ENCODE measurements at regions of chr9 and their contacts with region 1.

Region 1: DNA sequence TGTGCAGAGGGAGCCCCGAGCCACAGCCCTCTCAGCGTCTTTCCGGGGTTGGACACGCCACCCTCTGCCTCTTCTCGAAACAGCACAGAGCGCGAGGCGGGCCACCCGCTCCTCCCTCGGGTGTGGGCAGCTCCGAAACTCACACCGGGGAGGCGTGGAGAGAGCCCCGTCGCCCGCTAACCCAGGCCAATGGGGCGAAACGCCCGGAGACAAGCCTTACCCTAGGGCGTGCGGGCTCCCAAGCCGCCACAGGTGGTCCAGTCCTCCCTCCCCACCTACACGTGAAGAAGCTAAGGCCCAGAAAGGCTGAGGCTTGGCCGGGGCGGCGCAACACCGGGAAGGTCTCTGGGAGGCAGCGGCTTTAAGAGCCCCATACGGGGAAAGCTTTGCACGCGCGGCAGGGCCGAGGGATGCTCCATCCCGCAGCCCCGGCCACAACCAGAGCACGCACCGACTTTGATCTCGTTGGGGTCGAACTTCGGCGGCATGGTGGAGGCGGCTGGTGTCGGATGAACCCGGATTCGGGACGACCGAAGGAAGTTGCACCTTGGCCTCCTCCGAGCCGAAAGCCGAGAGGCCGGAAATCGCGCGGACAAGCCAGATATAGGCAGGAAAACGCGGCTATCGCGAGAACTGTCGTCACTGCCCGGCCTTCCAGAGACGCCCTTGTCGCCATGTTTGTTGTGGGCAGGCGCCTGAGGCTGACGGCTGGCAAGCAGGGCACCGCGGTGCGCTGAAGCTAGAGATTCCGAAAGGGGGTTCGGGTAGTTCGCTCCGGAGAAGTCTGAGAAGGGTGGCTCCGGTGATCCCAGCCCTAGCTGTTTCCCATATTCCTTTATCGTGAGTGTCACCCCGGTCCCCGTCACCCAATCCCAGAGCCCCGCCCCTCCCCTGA is at the starts of genes LRSAM1 and RPL12:
- DNase-seq: peak; percentile 94
- H3K4me3 Mint-ChIP-seq: peak within 1 kb of the TSS; percentile 93
- H3K27ac Mint-ChIP-seq: peak within 1 kb of the TSS; percentile 97
- H3K4me1 Mint-ChIP-seq: peaks cover 40% of the 10 kb centered on the region
- H3K27me3 Mint-ChIP-seq: no peaks in the 10 kb centered on the region
- CTCF ChIP-seq: no peak
- total RNA-seq, gene LRSAM1: 23.5 and 26.2 TPM in 2 replicates
- total RNA-seq, gene RPL12: 3,086 and 3,252 TPM in 2 replicates

Region 2: DNA sequence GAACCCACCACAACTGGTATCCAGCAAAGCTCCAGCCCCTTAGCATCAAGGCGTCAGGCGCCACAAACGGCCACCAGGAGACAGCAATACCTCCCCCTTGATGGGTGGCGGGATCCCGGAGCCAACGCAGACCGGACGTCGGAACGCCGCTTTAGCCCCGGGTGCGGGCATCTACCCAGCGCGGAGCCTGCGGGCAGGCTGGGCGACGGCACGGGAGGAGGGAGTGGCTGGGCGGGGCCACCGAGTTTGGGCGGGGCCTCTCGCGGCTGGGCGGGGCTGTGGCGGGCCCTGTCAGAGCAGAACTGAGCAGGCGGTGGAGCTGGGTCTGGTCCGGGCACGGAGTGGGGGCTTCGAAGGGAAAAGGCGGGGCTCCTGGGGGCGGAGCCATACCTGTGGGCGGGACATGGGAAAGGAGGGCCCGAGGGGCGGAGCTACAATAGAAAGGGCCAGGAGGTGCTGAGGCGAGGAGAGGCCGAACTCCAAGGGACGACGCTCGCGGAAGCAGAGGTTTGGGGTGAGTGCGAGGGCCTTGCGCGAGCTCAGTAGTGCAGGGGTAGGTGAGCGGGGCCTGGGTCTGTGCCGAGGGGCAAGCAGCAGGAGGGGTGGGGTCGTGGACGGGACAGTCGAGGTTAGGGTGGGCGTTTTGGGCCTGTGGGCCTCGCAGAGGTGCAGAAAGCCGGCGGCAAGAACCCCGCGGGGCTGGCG is 226.7 kb before region 1 on chr9:
- CTCF ChIA-PET with region 1: no interaction called
- POLR2A ChIA-PET with region 1: interaction called, 13 read pairs
- intact Hi-C with region 1: loop called (anchors 10 kb)
- DNase-seq: peak; percentile 74
- H3K4me3 Mint-ChIP-seq: peak overlapping the region; percentile 83
- H3K27ac Mint-ChIP-seq: no peak overlapping the region
- H3K4me1 Mint-ChIP-seq: no peaks in the 10 kb centered on the region
- H3K27me3 Mint-ChIP-seq: peaks cover 29% of the 10 kb centered on the region
- CTCF ChIP-seq: no peak

Region 3: DNA sequence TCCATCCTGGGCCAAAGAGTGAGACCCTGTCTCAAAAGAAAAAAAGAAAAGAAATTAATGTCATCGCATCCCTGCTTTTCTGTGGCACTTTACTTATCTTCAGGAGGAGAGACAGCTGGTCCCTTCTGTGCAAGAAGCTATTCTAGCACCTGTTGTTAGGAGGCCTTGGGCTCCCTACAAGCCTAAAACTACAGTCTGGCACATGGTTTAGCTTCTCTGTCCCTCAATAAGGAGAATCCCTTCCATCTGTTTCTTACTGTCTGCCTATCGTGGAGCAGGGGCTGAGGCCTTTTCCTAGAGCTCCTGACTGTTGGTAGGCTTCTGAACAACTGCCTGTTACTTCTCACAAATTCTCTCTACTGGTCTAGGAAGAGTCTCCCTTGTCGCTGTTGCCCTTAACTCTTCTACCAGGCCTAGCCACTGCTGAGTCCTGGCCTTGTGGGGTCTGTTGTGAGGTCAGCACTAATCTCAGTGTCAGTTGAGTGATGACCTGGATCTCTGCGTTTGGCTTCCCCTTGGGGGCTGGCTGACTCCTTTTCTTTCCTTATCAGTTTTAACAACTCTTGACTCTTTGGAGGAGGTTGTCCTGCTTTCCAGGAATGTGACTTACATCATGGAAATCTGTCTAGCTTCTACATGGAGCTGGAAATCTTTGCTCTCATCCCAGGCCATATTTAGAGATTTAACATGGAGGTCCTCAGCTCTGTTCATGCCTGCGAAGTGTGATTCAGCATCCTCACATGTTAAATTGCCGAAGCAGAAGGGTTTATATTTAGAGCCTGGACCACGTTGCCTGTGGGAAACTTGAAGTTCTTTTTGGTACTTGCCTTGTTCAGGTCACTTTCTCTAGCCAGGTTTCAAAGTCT is 192.2 kb before region 1 on chr9:
- CTCF ChIA-PET with region 1: no interaction called
- POLR2A ChIA-PET with region 1: no interaction called
- intact Hi-C with region 1: no loop called
- DNase-seq: no peak
- H3K4me3 Mint-ChIP-seq: no peak overlapping the region
- H3K27ac Mint-ChIP-seq: no peak overlapping the region
- H3K4me1 Mint-ChIP-seq: no peaks in the 10 kb centered on the region
- H3K27me3 Mint-ChIP-seq: no peaks in the 10 kb centered on the region
- CTCF ChIP-seq: no peak

Region 4: DNA sequence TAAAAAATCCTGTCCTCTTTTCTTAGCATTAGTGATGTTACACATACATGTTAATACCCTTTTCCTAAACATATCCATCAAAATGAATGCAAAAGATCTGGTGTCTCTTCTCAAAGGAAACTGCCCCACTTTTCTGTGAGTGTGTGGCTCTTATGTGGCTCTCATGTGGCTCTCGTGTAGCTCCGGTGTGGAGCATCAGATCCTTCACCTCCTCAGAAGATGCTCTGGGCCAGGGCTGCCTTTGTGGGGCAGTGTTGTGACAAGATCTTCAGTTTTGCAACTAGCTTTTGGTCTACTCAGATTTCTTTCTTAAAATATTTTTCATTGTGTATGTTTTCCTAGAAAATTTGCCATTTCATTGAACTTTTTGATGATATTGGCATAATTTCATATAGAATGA is 167.2 kb before region 1 on chr9:
- CTCF ChIA-PET with region 1: no interaction called
- POLR2A ChIA-PET with region 1: interaction called, 11 read pairs
- intact Hi-C with region 1: no loop called
- DNase-seq: peak; percentile 49
- H3K4me3 Mint-ChIP-seq: no peak overlapping the region
- H3K27ac Mint-ChIP-seq: no peak overlapping the region
- H3K4me1 Mint-ChIP-seq: peaks cover 7% of the 10 kb centered on the region
- H3K27me3 Mint-ChIP-seq: no peaks in the 10 kb centered on the region
- CTCF ChIP-seq: peak; percentile 33

Region 5: GRCh38 chr9:127388037-127388855 is 62.8 kb before region 1 on chr9:
- CTCF ChIA-PET with region 1: no interaction called
- POLR2A ChIA-PET with region 1: interaction called, 16 read pairs
- intact Hi-C with region 1: no loop called
- DNase-seq: peak; percentile 93
- H3K4me3 Mint-ChIP-seq: peak overlapping the region; percentile 14
- H3K27ac Mint-ChIP-seq: peak overlapping the region; percentile 77
- H3K4me1 Mint-ChIP-seq: peaks cover 14% of the 10 kb centered on the region
- H3K27me3 Mint-ChIP-seq: no peaks in the 10 kb centered on the region
- CTCF ChIP-seq: no peak

Measured in MCF 10A (cell line).